Ascending aorta (tissue), 2 donors: ENCODE measurements at regions of chr6 and their contacts with region 1.

Region 1: GRCh38 chr6:151071295-151071694 is 168.5 kb upstream of the AKAP12 start:
- DNase-seq: peak in 1 of 2 donors; percentile 81
- H3K4me3 ChIP-seq: peak overlapping the region in 1 of 2 donors; percentile 47
- H3K27ac ChIP-seq: peak overlapping the region; percentile 73 to 74
- H3K4me1 ChIP-seq: peaks cover 4 to 33% of the 10 kb centered on the region in 2 donors
- H3K27me3 ChIP-seq: no peaks in the 10 kb centered on the region
- CTCF ChIP-seq: no peak

Region 2: DNA sequence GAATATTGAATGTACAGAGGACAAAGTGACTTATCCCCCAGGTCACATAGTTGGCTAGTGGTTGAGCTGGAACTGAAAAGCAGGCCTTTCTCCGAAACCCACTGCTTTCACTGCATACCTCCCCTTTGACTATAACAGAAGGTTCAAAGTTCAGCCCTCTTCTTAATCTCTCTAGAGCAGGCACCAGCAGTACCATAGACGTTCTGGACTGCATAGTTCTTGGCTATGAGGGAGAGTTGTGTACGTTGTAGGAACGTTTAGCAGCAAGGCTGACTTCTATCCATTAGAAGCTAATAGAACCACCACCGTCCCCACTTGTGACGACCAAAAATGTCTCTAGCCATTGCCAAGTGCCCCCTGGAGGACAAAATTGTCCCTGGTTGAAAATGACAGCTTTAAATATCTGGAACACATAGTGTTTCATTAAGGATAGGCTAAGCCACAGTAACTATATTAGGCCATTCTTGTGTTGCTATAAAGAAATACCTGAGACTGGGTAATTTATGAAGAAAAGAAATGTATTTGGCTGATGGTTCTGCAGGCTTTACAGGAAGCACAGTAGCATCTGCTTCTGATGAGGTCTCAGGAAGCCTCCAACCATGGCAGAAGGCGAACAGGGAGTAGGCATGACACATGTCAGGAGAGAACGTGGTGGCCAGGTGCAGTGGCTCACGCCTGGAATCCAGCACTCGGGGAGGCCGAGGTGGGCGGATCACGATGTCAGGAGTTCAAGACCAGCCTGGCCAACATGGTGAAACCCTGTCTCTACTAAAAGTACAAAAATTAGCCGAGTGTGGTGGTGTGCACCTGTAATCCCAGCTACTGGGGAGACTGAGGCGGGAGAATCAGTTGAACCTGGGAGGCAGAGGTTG is 329.4 kb before region 1 on chr6:
- intact Hi-C with region 1: no loop called
- DNase-seq: no peak
- H3K4me3 ChIP-seq: no peak overlapping the region
- H3K27ac ChIP-seq: no peak overlapping the region
- H3K4me1 ChIP-seq: no peaks in the 10 kb centered on the region
- H3K27me3 ChIP-seq: no peaks in the 10 kb centered on the region
- CTCF ChIP-seq: peak; percentile 3 to 45 (median 12)

Region 3: DNA sequence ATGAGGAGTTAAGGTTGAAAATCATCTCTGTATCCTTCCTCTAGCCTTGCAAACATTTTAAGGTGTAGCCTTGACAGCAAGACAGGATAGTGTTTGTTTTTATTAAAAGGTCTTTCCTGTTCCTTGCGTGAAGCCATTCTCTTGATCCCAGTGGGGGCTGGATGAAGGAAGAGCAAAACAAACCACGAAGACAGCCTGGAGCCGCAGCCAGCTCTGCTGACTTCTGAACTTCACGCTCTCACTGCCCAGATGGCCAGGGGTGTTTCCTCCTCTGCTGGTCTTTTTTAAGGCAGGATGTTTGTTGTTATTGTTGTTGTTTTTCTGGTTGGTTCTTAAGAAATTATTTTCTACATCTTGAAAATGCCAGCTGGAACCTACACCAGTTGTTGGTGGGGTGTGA is 49.4 kb before region 1 on chr6:
- intact Hi-C with region 1: loop called (anchors 5 kb)
- DNase-seq: peak in 1 of 2 donors; percentile 44
- H3K4me3 ChIP-seq: no peak overlapping the region
- H3K27ac ChIP-seq: no peak overlapping the region
- H3K4me1 ChIP-seq: peaks cover 0 to 6% of the 10 kb centered on the region in 2 donors
- H3K27me3 ChIP-seq: no peaks in the 10 kb centered on the region
- CTCF ChIP-seq: no peak

Region 4: DNA sequence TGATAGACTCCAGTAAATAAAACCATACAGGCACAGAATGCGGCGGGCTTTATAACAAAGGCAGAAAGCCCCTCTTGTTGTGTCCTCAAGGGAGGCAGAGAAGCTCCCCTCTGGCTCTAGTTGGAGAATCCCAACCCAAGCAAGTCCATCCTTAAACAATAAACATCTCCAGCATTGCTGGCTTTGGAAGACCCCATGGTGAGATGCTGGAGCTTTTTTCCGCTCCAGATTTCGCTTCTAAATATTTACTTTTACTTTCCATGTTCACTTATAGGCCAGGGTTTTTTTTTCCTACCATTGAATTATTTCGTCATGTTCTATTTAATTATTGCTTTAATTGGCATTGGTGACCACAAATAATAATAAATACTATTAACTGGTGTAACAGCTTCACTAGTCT is 29.6 kb before region 1 on chr6:
- intact Hi-C with region 1: loop called (anchors 2 kb)
- DNase-seq: no peak
- H3K4me3 ChIP-seq: no peak overlapping the region
- H3K27ac ChIP-seq: peak overlapping the region; percentile 88 to 92
- H3K4me1 ChIP-seq: peaks cover 3 to 30% of the 10 kb centered on the region in 2 donors
- H3K27me3 ChIP-seq: no peaks in the 10 kb centered on the region
- CTCF ChIP-seq: no peak

Region 5: DNA sequence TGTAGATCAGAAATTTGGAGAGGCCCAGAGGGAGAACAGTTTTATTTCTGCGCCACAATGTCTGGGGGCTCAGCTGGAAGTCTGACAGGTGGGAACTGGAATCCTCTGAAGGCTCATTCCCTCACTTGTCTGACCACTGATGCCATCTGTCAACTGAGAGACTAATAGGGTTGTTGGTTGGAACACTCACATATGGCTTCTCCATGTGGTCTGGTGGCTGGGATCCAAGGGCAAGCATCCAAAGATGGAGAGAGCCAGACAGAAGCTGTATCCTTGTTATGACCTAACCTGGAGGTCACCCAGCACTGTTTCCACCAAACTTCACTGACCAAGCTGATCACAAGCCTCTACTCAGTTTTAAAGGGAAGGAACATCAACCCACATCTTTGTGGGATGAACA is 50.6 kb after region 1 on chr6:
- intact Hi-C with region 1: no loop called
- DNase-seq: no peak
- H3K4me3 ChIP-seq: no peak overlapping the region
- H3K27ac ChIP-seq: no peak overlapping the region
- H3K4me1 ChIP-seq: no peaks in the 10 kb centered on the region
- H3K27me3 ChIP-seq: no peaks in the 10 kb centered on the region
- CTCF ChIP-seq: no peak

Region 6: GRCh38 chr6:151224076-151224475 is 152.8 kb after region 1 on chr6:
- intact Hi-C with region 1: no loop called
- DNase-seq: no peak
- H3K4me3 ChIP-seq: no peak overlapping the region
- H3K27ac ChIP-seq: no peak overlapping the region
- H3K4me1 ChIP-seq: no peaks in the 10 kb centered on the region
- H3K27me3 ChIP-seq: no peaks in the 10 kb centered on the region
- CTCF ChIP-seq: no peak

Region 7: DNA sequence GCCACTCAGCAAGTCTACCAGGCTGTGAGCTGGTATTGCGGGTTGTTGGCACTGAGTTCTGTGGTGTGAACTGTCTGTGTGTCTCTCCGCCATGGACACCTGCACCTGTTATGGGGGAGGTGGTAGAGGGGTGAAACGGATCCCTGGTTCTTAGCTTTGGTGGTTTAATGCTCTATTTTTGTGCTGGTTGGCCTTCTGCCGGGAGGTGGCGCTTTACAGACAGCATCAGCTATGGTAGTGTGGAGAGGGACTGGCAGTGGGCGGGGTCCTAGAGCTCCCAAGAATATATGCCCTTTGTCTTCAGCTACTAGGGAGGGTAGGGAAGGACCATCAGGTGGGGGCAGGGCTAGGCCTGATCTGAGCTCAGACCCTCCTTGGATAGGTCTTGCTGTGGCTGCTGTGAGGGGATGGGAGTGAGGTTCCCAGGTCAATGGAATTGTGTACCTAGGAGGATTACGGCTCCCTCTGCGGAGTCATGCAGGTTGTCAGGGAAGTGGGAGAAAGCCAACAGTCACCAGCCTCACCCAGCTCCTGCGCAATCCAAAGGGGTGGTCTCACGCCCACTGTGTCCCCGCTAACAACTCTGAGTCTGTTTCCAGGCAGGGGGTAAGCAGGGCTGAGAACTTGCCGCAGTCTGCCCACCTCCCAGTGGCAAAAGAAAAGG is 576.8 kb after region 1 on chr6:
- intact Hi-C with region 1: no loop called
- DNase-seq: no peak
- H3K4me3 ChIP-seq: no peak overlapping the region
- H3K27ac ChIP-seq: no peak overlapping the region
- H3K4me1 ChIP-seq: no peaks in the 10 kb centered on the region
- H3K27me3 ChIP-seq: no peaks in the 10 kb centered on the region
- CTCF ChIP-seq: no peak